OCI-LY7 (cell line): ENCODE measurements at regions of chr6 and their contacts with region 1.

Region 1: DNA sequence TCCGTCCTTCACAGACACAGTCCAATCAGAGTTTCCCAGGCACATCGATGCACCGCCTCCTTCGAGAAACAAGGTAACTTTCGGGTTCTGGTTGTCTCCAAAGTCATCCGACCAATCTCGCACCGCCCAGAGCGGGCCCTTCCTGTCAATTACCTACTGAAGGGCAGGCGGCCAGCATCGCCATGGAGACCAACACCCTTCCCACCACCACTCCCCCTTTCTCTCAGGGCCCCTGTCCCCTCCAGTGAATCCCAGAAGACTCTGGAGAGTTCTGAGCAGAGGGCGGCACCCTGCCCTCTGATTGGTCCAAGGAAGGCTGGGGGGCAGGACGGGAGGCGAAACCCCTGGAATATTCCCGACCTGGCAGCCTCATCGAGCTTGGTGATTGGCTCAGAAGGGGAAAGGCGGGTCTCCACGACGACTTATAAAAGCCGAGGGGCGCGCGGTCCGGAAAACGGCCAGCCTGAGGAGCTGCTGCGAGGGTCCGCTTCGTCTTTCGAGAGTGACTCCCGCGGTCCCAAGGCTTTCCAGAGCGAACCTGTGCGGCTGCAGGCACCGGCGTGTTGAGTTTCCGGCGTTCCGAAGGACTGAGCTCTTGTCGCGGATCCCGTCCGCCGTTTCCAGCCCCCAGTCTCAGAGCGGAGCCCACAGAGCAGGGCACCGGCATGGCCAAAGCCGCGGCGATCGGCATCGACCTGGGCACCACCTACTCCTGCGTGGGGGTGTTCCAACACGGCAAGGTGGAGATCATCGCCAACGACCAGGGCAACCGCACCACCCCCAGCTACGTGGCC is at the start of gene HSPA1B:
- DNase-seq: peak; percentile 94
- H3K4me3 ChIP-seq: peak within 1 kb of the TSS; percentile 76
- H3K27ac ChIP-seq: peak within 1 kb of the TSS; percentile 67
- H3K4me1 ChIP-seq: peaks cover 49% of the 10 kb centered on the region
- CTCF ChIP-seq: no peak
- total RNA-seq, gene HSPA1B: 160 and 177 TPM in 2 replicates

Region 2: DNA sequence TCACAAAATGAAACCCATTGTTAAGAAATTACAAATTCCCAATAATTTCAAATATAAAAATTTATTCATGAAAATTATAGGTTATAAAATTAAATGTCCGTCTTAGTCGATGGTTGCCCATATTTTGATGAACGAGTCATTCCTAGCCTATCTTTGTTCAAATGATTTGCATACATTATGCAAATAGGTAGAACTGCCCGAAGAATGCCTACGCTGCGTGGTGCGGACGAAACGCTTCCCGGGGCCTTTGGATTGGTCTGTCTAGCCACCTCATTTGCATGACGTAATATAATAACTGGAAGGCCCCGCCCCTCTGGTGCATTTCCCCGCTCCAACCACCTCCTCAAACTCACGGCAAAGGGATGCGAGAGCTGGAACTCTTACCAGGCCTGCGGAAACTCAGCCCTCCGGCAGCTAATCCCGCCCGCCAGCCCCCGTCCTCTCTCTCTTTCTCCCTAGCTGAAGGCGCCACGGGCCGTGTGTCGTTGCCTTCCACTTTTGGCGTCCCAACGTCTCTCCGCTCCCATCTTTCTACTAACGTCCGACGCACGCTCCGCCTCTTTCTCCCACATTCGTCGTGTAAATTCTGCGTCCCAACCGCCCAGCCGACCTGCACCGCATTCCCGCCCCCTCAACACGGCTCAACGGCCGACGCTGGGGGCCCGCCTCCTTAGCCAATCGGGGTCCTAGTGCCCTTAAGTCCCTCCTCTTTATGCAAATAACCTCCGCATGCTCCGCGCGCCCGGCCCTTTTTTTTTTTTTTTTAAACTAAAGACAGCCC is 207.5 kb before region 1 on chr6:
- CTCF ChIA-PET with region 1: no interaction called
- POLR2A ChIA-PET with region 1: no interaction called
- intact Hi-C with region 1: loop called (anchors 2 kb)
- DNase-seq: peak; percentile 99
- H3K4me3 ChIP-seq: peak overlapping the region; percentile 83
- H3K27ac ChIP-seq: peak overlapping the region; percentile 94
- H3K4me1 ChIP-seq: peaks cover 42% of the 10 kb centered on the region
- CTCF ChIP-seq: no peak

Region 3: GRCh38 chr6:31680840-31681671 is 146.4 kb before region 1 on chr6 and contains the start of gene LY6G5C:
- CTCF ChIA-PET with region 1: no interaction called
- POLR2A ChIA-PET with region 1: no interaction called
- intact Hi-C with region 1: loop called (anchors 1 kb)
- DNase-seq: peak; percentile 74
- H3K4me3 ChIP-seq: peak within 1 kb of the TSS; percentile 18
- H3K27ac ChIP-seq: no peak within 1 kb of the TSS
- H3K4me1 ChIP-seq: peaks cover 30% of the 10 kb centered on the region
- CTCF ChIP-seq: no peak; the same call in 1 of the 2 replicates
- total RNA-seq, gene LY6G5C: 1.6 and 1.8 TPM in 2 replicates

Region 4: GRCh38 chr6:31729515-31729978 is 97.9 kb before region 1 on chr6:
- CTCF ChIA-PET with region 1: interaction called, 3 read pairs
- POLR2A ChIA-PET with region 1: interaction called, 43 read pairs
- intact Hi-C with region 1: loop called (anchors 1 kb)
- DNase-seq: peak; percentile 85
- H3K4me3 ChIP-seq: peak overlapping the region; percentile 66
- H3K27ac ChIP-seq: peak overlapping the region; percentile 2
- H3K4me1 ChIP-seq: peaks cover 54% of the 10 kb centered on the region
- CTCF ChIP-seq: 0 out of 2 replicates have a peak, but pooled peaks have one; percentile 25

Region 5: GRCh38 chr6:31776989-31777666 is 50.4 kb before region 1 on chr6 and contains the start of gene VWA7:
- CTCF ChIA-PET with region 1: no interaction called
- POLR2A ChIA-PET with region 1: no interaction called
- intact Hi-C with region 1: loop called (anchors 2 kb)
- DNase-seq: no peak
- H3K4me3 ChIP-seq: no peak within 1 kb of the TSS
- H3K27ac ChIP-seq: no peak within 1 kb of the TSS
- H3K4me1 ChIP-seq: no peaks in the 10 kb centered on the region
- CTCF ChIP-seq: no peak
- total RNA-seq, gene VWA7: 2.1 and 2.2 TPM in 2 replicates

Region 6: GRCh38 chr6:31795616-31796298 is 31.7 kb before region 1 on chr6 and contains the start of gene VARS1:
- CTCF ChIA-PET with region 1: interaction called, 4 read pairs
- POLR2A ChIA-PET with region 1: interaction called, 6 read pairs
- intact Hi-C with region 1: loop called (anchors 2 kb)
- DNase-seq: peak; percentile 92
- H3K4me3 ChIP-seq: peak within 1 kb of the TSS; percentile 90
- H3K27ac ChIP-seq: peak within 1 kb of the TSS; percentile 71
- H3K4me1 ChIP-seq: peaks cover 49% of the 10 kb centered on the region
- CTCF ChIP-seq: peak; percentile 74
- total RNA-seq, gene VARS1: 47.0 and 51.2 TPM in 2 replicates

Region 7: DNA sequence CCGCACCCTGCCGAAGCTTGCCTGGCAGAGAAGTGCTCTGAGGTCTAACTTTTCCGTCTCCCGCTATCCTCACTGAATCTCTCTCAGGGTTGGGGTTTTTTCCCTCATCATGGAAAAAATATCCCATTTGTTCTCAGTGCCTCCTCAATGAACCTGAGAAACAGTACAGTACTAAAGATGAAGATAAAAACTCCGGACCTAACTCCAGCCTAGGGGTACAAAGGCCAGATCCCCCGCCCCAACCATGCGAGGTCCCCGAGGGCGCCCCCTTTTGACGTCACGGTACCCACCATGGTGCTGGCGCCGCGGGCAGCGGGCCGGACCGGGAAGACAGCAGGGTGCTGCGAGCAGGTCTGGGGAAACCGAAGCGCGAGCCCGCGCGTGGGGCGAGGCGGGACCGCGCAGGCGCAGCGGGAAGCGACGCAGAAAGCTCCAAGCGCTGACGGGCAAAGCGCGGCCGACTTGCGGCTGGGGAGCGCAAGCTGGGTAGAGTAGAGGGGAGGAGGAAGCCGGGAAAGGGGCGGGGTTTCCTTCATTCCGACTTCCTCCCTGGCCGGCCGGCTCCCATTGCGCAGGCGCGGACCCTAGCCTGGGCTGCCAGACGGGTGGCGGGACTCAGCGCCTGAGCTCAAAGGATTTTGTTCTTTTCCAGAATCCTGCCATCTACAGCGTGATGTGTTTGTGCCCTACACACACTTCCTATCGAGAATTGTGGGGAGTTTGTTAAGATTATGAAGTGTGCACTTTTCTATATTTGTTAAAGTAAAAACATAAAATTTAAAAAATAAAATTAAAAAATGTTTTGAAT is 20.8 kb before region 1 on chr6 and contains the start of gene LSM2:
- CTCF ChIA-PET with region 1: interaction called, 3 read pairs
- POLR2A ChIA-PET with region 1: interaction called, 12 read pairs
- intact Hi-C with region 1: no loop called
- DNase-seq: peak; percentile 95
- H3K4me3 ChIP-seq: peak within 1 kb of the TSS; percentile 85
- H3K27ac ChIP-seq: peak within 1 kb of the TSS; percentile 63
- H3K4me1 ChIP-seq: peaks cover 13% of the 10 kb centered on the region
- CTCF ChIP-seq: peak; percentile 70
- total RNA-seq, gene LSM2: 65.2 and 78.4 TPM in 2 replicates